Right ventricle myocardium superior (tissue), 1 donor: ENCODE measurements at regions of chr15 and their contacts with region 1.

Region 1: GRCh38 chr15:81098861-81099651 is 35.0 kb upstream of the CFAP161 start:
- DNase-seq: peak; percentile 57
- ATAC-seq: peak; percentile 66

Region 2: GRCh38 chr15:80619680-80620079 is 479.4 kb before region 1 on chr15:
- intact Hi-C with region 1: no loop called
- DNase-seq: no peak
- ATAC-seq: peak; percentile 72

Region 3: GRCh38 chr15:81000624-81001151 is 98.4 kb before region 1 on chr15 and contains the start of gene TLNRD1:
- intact Hi-C with region 1: loop called (anchors 5 kb)
- DNase-seq: peak; percentile 93
- ATAC-seq: peak; percentile 87
- total RNA-seq, gene TLNRD1: 6.1 TPM

Region 4: DNA sequence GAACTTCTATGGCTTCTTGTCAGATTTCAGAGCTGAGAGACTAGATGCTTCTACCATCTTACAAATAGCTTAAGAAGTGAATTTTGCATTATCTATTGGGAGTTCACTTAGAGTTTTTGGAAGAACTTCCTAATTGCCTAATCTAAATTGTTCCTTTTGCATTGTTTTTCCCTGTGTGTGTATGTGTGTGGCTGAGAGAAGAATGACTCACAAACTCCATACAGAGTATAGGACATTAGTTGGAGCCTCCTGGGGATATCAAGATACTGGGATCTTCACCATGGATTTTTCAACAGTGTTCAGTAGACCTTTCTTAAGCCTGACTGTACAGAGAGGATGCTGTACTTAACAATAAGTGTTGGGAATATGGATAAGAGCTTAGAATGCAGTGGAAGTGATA is 87.5 kb before region 1 on chr15:
- intact Hi-C with region 1: no loop called
- DNase-seq: no peak
- ATAC-seq: no peak

Region 5: GRCh38 chr15:81049835-81050234 is 49.2 kb before region 1 on chr15:
- intact Hi-C with region 1: no loop called
- DNase-seq: no peak
- ATAC-seq: no peak